CD4-positive, alpha-beta T cell (primary cell): ENCODE measurements at regions of chr19 and their contacts with region 1.

Region 1: GRCh38 chr19:50511068-50511822 is at the start of gene JOSD2:
- DNase-seq: peak; percentile 94 to 100 (median 96)
- ATAC-seq: peak; percentile 91
- H3K4me3 ChIP-seq: peak within 1 kb of the TSS; percentile 79
- H3K4me3 Mint-ChIP-seq: peak within 1 kb of the TSS; percentile 95
- H3K27ac ChIP-seq: peak within 1 kb of the TSS; percentile 63 to 91
- H3K27ac Mint-ChIP-seq: peak within 1 kb of the TSS; percentile 89
- H3K4me1 ChIP-seq: peaks cover 23% of the 10 kb centered on the region
- H3K4me1 Mint-ChIP-seq: peaks cover 15% of the 10 kb centered on the region
- H3K27me3 ChIP-seq: peaks cover 0 to 4% of the 10 kb centered on the region in 2 experiments
- H3K27me3 Mint-ChIP-seq: peaks cover 6% of the 10 kb centered on the region
- CTCF ChIP-seq: no peak
- total RNA-seq, gene JOSD2: 11.7 to 11.9 TPM

Region 2: DNA sequence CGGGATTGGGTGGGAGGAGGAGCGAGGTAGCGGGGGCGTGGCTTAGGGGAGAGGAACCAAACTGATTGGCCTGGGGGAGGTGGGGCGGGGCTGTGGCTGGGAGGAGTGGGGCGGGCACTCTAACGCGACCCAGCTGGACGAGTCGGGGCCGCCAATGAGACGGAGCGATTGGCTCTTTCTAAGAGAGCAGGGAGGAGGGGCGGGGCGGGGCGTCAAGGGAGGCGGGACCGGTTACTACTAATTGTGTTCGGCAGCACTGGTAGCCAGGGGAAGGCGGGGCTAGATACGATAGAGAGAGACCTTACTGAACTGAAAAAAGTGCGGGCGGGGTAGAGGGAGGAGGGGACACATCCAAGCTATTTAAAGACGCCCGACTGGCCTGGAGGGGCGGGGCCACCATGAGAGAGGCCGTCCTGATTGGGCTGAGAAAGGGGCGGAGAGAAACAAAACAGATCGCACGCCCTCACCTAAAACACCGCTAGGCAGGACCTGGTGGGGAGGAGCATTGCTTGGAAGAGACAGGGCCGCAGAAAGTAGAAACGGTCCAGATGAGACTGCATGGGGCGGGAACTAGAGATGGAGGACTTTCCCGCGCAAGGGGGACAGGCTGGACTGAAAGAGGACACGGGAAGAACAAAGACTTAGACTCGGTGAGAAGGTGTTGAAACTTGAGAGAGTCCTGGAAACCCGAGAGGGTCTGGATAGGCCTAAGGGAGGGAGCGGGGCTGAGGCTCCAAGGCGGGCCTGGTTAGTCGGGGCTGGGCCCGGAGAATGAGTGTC is 181.9 kb before region 1 on chr19 and contains the start of gene KCNC3:
- CTCF ChIA-PET with region 1: no interaction called
- POLR2A ChIA-PET with region 1: interaction called, 9 read pairs
- intact Hi-C with region 1: loop called in 1 of 2 experiments (anchors 2 kb)
- DNase-seq: peak; percentile 79 to 96 (median 92)
- ATAC-seq: peak; percentile 60
- H3K4me3 ChIP-seq: peak within 1 kb of the TSS; percentile 32
- H3K4me3 Mint-ChIP-seq: peak within 1 kb of the TSS; percentile 87
- H3K27ac ChIP-seq: no peak within 1 kb of the TSS
- H3K27ac Mint-ChIP-seq: peak within 1 kb of the TSS; percentile 83
- H3K4me1 ChIP-seq: peaks cover 84% of the 10 kb centered on the region
- H3K4me1 Mint-ChIP-seq: peaks cover 81% of the 10 kb centered on the region
- H3K27me3 ChIP-seq: peaks cover 62 to 63% of the 10 kb centered on the region in 2 experiments
- H3K27me3 Mint-ChIP-seq: peaks cover 73% of the 10 kb centered on the region
- CTCF ChIP-seq: no peak
- total RNA-seq, gene KCNC3: 1.6 to 2.0 TPM

Region 3: DNA sequence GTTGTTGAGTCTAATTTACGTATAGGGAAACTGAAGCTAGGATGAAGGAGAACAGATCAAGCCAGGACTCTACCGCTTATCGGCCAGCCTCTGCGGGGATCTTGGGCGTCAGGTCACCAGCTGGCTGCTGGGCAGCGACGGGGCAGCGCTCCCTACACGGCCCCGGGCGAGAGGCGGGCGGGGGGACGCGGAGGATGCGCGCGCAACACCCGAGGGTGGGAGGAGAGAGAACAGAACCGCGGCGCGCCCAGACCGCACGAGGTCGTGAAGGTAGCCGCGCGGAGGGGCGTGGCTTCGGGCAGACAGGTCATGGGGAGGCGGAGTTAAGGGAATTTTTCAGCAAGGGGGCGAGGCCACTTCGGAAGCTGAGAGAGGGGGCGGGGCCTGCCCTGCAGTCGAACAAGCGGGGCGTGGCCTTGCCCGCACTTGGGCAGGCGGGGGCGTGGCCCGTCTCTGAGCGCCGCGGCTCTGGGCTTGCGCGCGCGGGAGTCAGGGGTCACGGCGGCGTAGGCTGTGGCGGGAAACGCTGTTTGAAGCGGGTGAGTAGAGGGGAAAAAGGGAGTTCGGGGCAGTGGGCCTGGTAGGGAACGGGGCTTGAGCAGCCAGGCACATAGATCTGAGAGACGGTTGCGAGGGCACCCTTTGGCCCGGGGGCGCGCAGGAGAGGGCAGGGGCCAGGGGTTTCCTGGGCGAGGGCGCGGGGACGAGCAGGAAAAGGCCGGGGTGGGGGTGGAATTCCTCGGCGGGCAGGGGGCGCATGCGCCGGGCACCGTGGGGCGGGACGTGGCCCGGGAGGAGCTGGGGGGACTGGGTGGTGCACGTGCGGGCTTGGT is 127.2 kb before region 1 on chr19 and contains the start of gene POLD1:
- CTCF ChIA-PET with region 1: no interaction called
- POLR2A ChIA-PET with region 1: interaction called, 5 read pairs
- intact Hi-C with region 1: loop called in 1 of 2 experiments (anchors 2 kb)
- DNase-seq: peak; percentile 98 to 100 (median 99)
- ATAC-seq: peak; percentile 88
- H3K4me3 ChIP-seq: peak within 1 kb of the TSS; percentile 66
- H3K4me3 Mint-ChIP-seq: peak within 1 kb of the TSS; percentile 96
- H3K27ac ChIP-seq: peak within 1 kb of the TSS; percentile 70 to 81
- H3K27ac Mint-ChIP-seq: peak within 1 kb of the TSS; percentile 90
- H3K4me1 ChIP-seq: peaks cover 22% of the 10 kb centered on the region
- H3K4me1 Mint-ChIP-seq: peaks cover 38% of the 10 kb centered on the region
- H3K27me3 ChIP-seq: no peaks in the 10 kb centered on the region
- H3K27me3 Mint-ChIP-seq: peaks cover 6% of the 10 kb centered on the region
- CTCF ChIP-seq: no peak
- total RNA-seq, gene POLD1: 22.1 to 24.2 TPM

Region 4: DNA sequence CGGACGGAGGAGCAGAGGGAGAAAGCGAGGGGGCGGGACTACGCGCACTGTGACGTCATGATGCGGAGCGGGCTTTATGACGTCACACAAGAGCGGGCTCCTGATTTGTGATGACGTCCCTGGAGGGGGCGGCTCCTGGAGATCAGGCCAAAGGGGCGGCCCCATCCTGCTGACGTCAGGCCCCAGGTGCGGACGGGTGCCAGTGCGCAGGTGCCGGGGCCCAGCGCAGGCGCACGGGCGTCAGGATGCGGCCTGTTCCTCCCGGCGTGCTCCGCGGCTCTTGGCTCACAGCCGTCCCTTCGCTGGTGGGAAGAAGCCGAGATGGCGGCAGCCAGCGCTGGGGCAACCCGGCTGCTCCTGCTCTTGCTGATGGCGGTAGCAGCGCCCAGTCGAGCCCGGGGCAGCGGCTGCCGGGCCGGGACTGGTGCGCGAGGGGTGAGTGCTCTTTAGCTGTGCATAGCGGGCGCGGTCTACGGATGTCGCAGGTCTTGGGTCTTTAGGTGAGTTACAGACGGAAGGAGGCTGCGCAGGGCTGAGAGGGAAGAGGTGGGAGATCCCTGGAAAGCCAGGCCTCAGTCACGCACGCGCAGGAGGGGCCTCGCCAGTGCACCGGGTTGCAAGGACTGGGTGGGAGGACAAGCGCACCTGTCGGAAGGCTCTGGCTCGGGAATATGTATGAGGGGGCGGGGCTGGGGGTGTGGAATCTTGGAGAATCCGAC is 34.9 kb before region 1 on chr19 and contains the starts of genes EMC10 and GARIN5A:
- CTCF ChIA-PET with region 1: no interaction called
- POLR2A ChIA-PET with region 1: interaction called, 7 read pairs
- intact Hi-C with region 1: loop called (anchors 1 kb)
- DNase-seq: peak; percentile 81 to 98 (median 92)
- ATAC-seq: peak; percentile 95
- H3K4me3 ChIP-seq: peak within 1 kb of the TSS; percentile 79
- H3K4me3 Mint-ChIP-seq: peak within 1 kb of the TSS; percentile 95
- H3K27ac ChIP-seq: peak within 1 kb of the TSS; percentile 73 to 82
- H3K27ac Mint-ChIP-seq: peak within 1 kb of the TSS; percentile 95
- H3K4me1 ChIP-seq: peaks cover 43% of the 10 kb centered on the region
- H3K4me1 Mint-ChIP-seq: peaks cover 22% of the 10 kb centered on the region
- H3K27me3 ChIP-seq: no peaks in the 10 kb centered on the region
- H3K27me3 Mint-ChIP-seq: no peaks in the 10 kb centered on the region
- CTCF ChIP-seq: no peak
- total RNA-seq, gene EMC10: 80.0 to 80.3 TPM
- total RNA-seq, gene GARIN5A: 0.50 TPM in 1 of 2 experiments, not detected in the other

Region 5: DNA sequence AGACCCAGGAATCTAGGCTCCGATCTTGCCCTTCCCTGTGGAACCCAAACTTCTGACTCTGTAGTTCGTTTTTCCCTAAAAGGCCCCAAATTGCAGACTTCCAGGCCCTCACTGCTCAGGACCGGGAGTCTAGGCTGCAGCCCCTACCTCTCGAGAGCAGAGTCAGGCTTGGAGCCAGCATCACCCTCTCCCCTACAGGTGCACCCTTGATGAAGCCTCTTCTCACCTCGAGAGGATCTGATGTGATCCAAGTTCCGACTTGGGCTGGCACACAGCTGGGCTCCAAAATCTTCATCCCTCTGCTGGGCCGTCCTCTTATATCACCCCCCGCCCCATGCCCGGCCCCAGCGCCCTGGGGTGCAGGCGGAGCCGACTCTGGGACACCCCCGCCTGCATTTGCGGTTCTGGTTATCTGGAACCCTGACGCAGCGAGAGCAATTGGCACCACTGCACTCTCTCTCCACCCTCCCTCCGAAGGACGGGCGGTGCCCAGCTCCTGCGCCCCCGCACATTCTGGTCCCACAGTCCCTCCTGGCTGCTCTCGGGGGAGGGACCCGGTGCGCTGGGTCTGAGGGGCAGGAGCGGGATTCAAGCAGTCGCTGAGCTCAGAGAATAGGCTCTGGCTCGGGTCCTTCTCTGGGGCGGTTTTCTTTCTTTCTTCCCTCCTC is 472.5 kb after region 1 on chr19 and contains the start of gene KLK7:
- CTCF ChIA-PET with region 1: no interaction called
- POLR2A ChIA-PET with region 1: no interaction called
- intact Hi-C with region 1: no loop called
- DNase-seq: no peak
- ATAC-seq: no peak
- H3K4me3 ChIP-seq: no peak within 1 kb of the TSS
- H3K4me3 Mint-ChIP-seq: no peak within 1 kb of the TSS
- H3K27ac ChIP-seq: no peak within 1 kb of the TSS
- H3K27ac Mint-ChIP-seq: no peak within 1 kb of the TSS
- H3K4me1 ChIP-seq: no peaks in the 10 kb centered on the region
- H3K4me1 Mint-ChIP-seq: no peaks in the 10 kb centered on the region
- H3K27me3 ChIP-seq: peaks cover 3 to 31% of the 10 kb centered on the region in 2 experiments
- H3K27me3 Mint-ChIP-seq: peaks cover 64% of the 10 kb centered on the region
- CTCF ChIP-seq: no peak
- total RNA-seq, gene KLK7: not detected

Region 6: GRCh38 chr19:51593969-51594773 is 1082.9 kb after region 1 on chr19:
- CTCF ChIA-PET with region 1: no interaction called
- POLR2A ChIA-PET with region 1: no interaction called
- intact Hi-C with region 1: loop called in 1 of 2 experiments (anchors 5 kb)
- DNase-seq: peak; percentile 88 to 99 (median 95)
- ATAC-seq: peak; percentile 100
- H3K4me3 ChIP-seq: peak overlapping the region; percentile 80
- H3K4me3 Mint-ChIP-seq: peak overlapping the region; percentile 94
- H3K27ac ChIP-seq: peak overlapping the region in 1 of 2 donors; percentile 42
- H3K27ac Mint-ChIP-seq: peak overlapping the region; percentile 71
- H3K4me1 ChIP-seq: peaks cover 21% of the 10 kb centered on the region
- H3K4me1 Mint-ChIP-seq: peaks cover 29% of the 10 kb centered on the region
- H3K27me3 ChIP-seq: peaks cover 7 to 8% of the 10 kb centered on the region in 2 experiments
- H3K27me3 Mint-ChIP-seq: peaks cover 31% of the 10 kb centered on the region
- CTCF ChIP-seq: no peak